Activated T-helper 2 cell treated with anti-CD3 and anti-CD28 coated beads, Interferon-gamma antibody, Interleukin-2, Interleukin-4, amounts not matched to agents 10 μg/mL and 5 μg/mL and 100 μg/mL, durations not matched to agents 14 hours and 24 hours and 36 hours (primary cell): ENCODE measurements at regions of chr9 and their contacts with region 1.

Region 1: GRCh38 chr9:91047993-91048607 is 246.5 kb downstream of the SYK start:
- DNase-seq: peak; percentile 56
- H3K4me3 Mint-ChIP-seq: peak overlapping the region; percentile 28
- H3K27ac Mint-ChIP-seq: peak overlapping the region; percentile 90
- H3K4me1 Mint-ChIP-seq: peaks cover 73% of the 10 kb centered on the region
- H3K27me3 Mint-ChIP-seq: no peaks in the 10 kb centered on the region

Region 2: DNA sequence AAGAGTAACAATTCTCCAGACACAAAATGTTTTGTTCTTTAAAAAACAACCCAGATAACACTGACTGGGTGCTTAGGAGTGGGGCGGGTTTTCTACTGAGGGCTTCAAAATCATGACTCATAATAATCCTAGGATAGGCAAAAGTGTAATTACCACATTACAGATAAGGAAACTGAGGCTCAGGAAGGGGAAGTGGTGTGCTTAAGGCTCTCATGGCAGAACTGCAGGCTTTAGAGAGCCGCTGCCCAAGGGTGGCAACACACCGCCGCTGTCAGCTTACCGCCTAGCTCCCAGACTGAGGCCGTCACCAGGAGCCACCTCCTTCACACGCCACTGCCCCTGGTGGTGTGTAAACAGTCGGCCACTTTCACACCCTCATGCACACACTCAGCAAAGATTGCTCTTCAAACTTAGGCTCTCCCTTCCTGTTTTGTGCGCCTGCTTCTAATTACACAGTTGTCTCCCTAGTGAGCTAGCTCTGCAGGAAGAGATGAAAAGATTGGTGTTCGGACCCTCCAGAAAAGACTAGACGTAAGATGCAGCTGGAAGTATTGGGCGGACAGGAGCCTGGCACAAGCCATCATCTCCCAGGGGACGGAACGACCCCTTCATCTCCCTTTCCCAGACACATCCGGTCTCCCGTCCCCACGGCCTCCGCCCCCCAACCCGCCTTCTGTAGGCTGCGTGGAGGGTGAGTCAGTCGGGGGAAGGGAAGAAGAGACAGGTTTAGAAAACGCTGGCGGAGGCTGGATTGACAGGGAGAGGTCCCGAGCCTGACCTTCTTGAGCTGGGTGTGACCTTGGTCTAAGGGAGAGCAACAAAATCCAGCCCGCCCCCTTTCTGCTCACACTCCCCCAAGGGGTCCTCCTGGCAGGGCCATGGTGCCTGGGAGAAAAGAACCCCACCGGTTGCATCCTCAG is 83.7 kb before region 1 on chr9:
- intact Hi-C with region 1: loop called (anchors 5 kb)
- DNase-seq: peak; percentile 17
- H3K4me3 Mint-ChIP-seq: peak overlapping the region; percentile 69
- H3K27ac Mint-ChIP-seq: peak overlapping the region; percentile 81
- H3K4me1 Mint-ChIP-seq: peaks cover 65% of the 10 kb centered on the region
- H3K27me3 Mint-ChIP-seq: no peaks in the 10 kb centered on the region

Region 3: DNA sequence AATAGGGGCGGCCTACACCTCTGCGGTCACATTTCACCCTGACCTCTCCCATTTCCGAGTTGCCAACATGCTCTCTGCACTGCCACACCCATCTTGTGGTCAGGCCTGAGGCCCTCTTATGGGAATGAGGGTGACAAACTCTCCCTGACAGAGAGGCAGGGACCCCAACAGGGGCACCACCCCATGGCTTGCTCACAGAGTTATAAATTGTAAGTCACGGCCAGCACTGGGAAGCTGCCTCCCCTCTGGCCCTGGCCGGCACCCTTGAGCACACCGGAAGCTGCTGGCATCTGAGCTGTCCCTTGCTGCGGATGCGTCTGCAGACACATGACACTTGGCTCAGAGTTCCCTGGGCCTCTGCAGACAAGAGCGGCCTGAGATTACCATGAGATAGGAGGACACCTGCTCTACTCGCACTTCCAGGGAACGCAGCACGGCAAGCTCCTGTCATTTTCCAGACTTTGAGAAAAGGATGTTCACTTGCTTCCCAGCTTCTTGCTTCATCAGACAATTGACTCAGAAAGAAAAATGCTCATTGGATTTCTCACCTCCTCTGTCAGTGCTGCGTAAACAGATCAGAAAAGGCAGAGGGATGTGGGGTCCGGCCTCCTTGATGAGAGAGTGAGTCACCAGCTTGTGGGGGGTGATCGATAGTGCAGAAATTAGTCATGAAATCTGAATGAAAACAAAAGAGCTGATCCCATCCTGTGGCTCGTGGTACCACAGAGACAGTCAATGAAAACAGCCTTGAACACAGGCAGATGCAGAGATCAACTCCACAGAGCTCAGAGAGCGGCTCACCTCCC is 23.3 kb after region 1 on chr9:
- intact Hi-C with region 1: loop called (anchors 1 kb)
- DNase-seq: peak; percentile 62
- H3K4me3 Mint-ChIP-seq: peak overlapping the region; percentile 46
- H3K27ac Mint-ChIP-seq: peak overlapping the region; percentile 98
- H3K4me1 Mint-ChIP-seq: peaks cover 16% of the 10 kb centered on the region
- H3K27me3 Mint-ChIP-seq: no peaks in the 10 kb centered on the region

Region 4: GRCh38 chr9:91131433-91131839 is 83.3 kb after region 1 on chr9:
- intact Hi-C with region 1: loop called (anchors 1 kb)
- DNase-seq: peak; percentile 81
- H3K4me3 Mint-ChIP-seq: peak overlapping the region; percentile 49
- H3K27ac Mint-ChIP-seq: peak overlapping the region; percentile 98
- H3K4me1 Mint-ChIP-seq: peaks cover 49% of the 10 kb centered on the region
- H3K27me3 Mint-ChIP-seq: no peaks in the 10 kb centered on the region

Region 5: DNA sequence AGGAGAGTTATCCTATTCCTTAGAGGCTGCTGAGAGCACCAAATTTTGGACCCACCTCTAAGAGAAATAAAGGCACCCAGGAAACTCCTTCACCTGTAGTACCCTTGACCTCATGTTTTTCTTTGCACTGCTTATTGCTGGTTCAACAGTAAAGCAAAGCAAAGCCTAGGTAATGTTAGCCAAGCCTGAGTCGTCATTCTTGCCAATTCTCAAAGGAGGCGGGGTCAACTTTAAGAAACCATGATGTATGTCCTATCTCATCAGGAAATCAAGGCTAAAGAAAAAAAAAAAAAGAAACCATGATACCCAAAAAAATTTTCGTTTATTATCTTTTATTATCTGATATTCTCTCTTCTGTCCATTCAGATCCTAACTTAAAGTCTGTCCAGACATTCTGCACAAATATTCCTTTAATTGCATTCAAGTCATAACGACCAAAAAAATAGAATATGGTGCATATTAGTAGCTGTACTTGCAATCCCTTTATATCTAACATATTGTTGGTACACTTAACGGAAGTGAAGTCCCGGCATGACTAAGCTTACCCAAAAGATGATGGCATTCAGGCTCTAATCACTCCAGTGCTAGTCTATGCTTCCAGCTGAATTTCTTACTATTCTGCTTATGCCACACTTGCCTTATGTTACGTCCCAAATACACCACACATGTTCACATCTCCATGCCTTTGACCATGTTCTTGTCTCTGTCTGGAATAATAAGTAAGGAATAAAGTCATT is 311.8 kb after region 1 on chr9:
- intact Hi-C with region 1: loop called (anchors 1 kb)
- DNase-seq: no peak
- H3K4me3 Mint-ChIP-seq: peak overlapping the region; percentile 98
- H3K27ac Mint-ChIP-seq: peak overlapping the region; percentile 99
- H3K4me1 Mint-ChIP-seq: peaks cover 64% of the 10 kb centered on the region
- H3K27me3 Mint-ChIP-seq: no peaks in the 10 kb centered on the region